Activated T-helper 1 cell treated with anti-CD3 and anti-CD28 coated beads, Interleukin-12 subunit alpha, Interleukin-12 subunit beta, Interleukin-2, Interleukin-4 antibody, amounts not matched to agents 30 ng/mL and 10 ng/mL and 1 ng/mL, durations not matched to agents 14 hours and 24 hours and 36 hours (primary cell): ENCODE measurements at regions of chr2 and their contacts with region 1.

Region 1: DNA sequence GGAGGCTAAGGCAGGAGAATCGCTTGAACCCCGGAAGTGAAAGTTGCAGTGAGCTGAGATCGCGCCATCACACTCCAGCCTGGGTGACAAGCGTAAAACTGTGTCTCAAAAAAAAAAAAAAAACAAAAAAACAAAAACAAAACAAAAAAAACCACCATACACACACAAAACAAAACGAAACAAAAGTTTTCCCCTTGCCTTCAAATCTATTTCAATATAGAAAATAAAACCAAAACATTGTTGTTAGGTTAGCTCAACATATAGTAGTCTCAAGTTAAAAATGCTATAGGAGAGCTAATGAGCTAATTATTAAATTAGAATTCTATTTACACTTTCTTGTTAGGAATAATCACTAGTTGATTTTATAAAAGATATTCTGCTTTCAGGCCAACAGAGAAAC is 43.3 kb downstream of the FBXO11 start:
- DNase-seq: no peak
- H3K4me3 Mint-ChIP-seq: no peak overlapping the region
- H3K27ac Mint-ChIP-seq: no peak overlapping the region
- H3K4me1 Mint-ChIP-seq: peaks cover 19% of the 10 kb centered on the region
- H3K27me3 Mint-ChIP-seq: no peaks in the 10 kb centered on the region

Region 2: GRCh38 chr2:46555011-46555410 is 1307.9 kb before region 1 on chr2:
- intact Hi-C with region 1: no loop called
- DNase-seq: no peak
- H3K4me3 Mint-ChIP-seq: no peak overlapping the region
- H3K27ac Mint-ChIP-seq: no peak overlapping the region
- H3K4me1 Mint-ChIP-seq: peaks cover 17% of the 10 kb centered on the region
- H3K27me3 Mint-ChIP-seq: peaks cover 3% of the 10 kb centered on the region

Region 3: GRCh38 chr2:48105848-48106247 is 242.9 kb after region 1 on chr2:
- intact Hi-C with region 1: loop called (anchors 1 kb)
- DNase-seq: no peak
- H3K4me3 Mint-ChIP-seq: no peak overlapping the region
- H3K27ac Mint-ChIP-seq: no peak overlapping the region
- H3K4me1 Mint-ChIP-seq: peaks cover 23% of the 10 kb centered on the region
- H3K27me3 Mint-ChIP-seq: peaks cover 7% of the 10 kb centered on the region

Region 4: DNA sequence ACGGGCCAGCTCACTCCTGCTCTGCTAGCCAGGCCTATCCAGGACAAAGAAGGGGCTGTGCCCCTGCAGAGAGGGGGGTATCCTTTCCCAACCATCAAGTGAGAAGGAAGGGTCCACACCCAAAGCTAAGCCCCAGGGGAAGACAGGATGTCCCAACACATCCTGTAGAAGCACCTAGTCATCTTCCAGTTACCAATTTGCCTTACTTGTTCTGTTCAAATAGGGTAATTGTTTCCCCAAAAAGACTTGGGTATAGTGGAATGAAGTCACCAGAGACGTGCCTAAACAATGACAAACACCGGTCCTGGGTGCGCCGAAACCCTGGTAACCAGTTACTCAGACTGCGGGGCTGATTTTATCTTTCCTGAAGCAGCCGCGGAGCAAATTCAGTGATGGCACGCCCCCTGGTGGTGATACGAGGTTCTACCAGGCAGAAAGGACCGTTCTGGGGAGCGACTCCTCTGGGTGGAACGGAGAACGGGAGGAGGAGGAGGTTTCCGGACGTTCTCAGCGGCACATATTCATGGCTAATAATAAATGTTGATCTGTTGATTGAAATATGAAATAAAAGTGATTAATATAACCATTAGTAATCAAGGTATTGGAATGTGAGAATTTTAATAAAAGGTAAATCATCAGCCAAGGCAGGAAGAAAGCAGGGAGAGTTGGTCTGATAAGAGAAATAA is 557.7 kb after region 1 on chr2:
- intact Hi-C with region 1: loop called (anchors 5 kb)
- DNase-seq: peak; percentile 88
- H3K4me3 Mint-ChIP-seq: no peak overlapping the region
- H3K27ac Mint-ChIP-seq: peak overlapping the region; percentile 72
- H3K4me1 Mint-ChIP-seq: peaks cover 52% of the 10 kb centered on the region
- H3K27me3 Mint-ChIP-seq: peaks cover 2% of the 10 kb centered on the region